GM10248 (cell line): ENCODE measurements at regions of chr19 and their contacts with region 1.

Region 1: DNA sequence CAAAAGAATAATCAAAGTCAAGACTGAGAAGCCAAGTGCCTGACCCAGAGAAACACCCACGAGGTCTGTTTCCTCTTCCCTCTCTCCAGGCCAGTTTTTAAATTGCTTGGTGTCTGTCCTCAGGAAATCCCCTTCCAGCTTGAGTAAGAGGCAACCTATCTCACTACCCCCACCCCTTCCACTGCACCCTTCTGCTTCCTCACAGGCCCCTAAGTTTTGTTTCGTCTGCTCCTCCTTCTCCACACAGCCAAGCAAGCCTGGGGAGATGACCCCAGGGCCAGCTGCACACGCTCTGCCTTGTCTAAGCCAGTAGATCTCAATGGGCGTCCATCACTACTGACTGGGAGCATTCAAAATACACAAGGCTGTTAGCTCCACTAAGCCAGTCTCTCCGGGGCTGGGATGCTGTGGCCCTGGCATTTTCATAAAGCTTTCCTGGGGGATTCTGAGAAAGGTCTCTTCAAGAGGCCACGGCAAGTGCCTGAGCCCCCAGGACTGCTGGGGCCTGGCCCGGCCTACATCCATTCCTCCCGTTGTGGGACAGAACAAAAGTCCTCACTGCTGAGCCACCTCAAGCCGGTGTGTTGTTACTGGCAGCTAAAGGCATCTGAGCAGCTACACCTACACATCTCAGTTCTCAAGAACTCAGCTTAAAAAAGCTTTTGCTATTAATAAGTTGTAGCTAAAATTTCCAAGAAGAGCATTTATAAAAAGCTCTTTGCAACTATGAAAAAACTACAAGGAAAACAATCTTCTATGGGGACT is 14.9 kb upstream of the IL4I1 start:
- DNase-seq: peak; percentile 79
- CTCF ChIP-seq: no peak

Region 2: GRCh38 chr19:49889687-49890348 is 21.7 kb before region 1 on chr19:
- CTCF ChIA-PET with region 1: interaction called, 15 read pairs
- POLR2A ChIA-PET with region 1: interaction called, 8 read pairs
- DNase-seq: peak; percentile 60
- CTCF ChIP-seq: peak; percentile 79

Region 3: GRCh38 chr19:49896863-49897621 is 14.5 kb before region 1 on chr19 and contains the start of gene IL4I1:
- CTCF ChIA-PET with region 1: interaction called, 28 read pairs
- POLR2A ChIA-PET with region 1: interaction called, 8 read pairs
- DNase-seq: peak; percentile 81
- CTCF ChIP-seq: no peak

Region 4: GRCh38 chr19:49929611-49930482 is 18.3 kb after region 1 on chr19:
- CTCF ChIA-PET with region 1: interaction called, 23 read pairs
- POLR2A ChIA-PET with region 1: interaction called, 36 read pairs
- DNase-seq: peak; percentile 97
- CTCF ChIP-seq: no peak